GM10248 (cell line): ENCODE measurements at regions of chr9 and their contacts with region 1.

Region 1: GRCh38 chr9:26326473-26327044 is 566.0 kb downstream of the CAAP1 start:
- DNase-seq: peak; percentile 21
- CTCF ChIP-seq: peak; percentile 74

Region 2: DNA sequence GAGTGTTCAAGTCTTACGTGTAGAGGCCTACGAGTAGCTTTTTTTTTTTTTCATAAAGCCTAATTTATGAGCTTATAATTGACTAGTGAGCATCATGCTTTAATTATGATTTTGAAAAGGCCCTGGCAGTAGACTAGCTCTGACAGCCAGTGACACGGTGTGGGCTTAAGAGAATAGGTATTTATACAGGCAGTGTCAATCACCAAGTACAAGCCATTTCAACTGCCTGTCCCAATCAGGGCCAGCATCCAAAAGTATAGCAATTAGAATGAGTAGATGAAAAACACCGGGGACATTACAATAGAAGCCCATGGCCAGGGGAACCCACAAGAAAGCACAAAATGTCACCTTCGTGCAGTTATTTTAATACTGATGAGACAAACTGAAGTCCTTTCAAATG is 13.2 kb after region 1 on chr9:
- CTCF ChIA-PET with region 1: interaction called, 15 read pairs
- POLR2A ChIA-PET with region 1: no interaction called
- DNase-seq: no peak
- CTCF ChIP-seq: no peak

Region 3: DNA sequence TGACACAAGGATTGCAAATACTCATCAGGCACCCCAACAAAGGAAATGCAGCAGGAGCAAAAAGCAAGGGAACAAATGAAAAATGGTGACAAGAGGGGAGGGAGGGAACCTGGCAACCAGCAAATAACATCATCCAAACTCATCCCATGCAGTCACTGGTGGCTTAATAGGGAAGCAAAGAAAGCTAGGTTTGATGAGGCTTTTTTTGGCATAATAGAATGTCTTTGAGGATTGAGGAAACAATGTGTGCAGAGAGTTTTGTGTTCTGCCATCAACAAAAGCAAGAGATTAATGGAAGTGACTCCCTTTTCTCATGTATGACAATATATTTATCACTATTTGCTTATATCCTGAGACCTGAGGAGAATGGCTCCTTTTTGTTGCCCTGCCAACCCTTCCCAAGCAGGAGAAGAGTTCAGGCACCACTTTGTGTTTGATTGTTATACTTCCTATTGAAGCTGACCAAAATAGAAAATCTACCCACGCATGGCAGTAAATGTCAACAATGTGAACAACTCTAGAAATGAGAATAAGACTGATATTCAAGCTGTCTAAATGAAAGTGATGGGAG is 190.3 kb after region 1 on chr9:
- CTCF ChIA-PET with region 1: no interaction called
- POLR2A ChIA-PET with region 1: no interaction called
- DNase-seq: no peak
- CTCF ChIP-seq: no peak